Activated naive CD4-positive, alpha-beta T cell treated with anti-CD3 and anti-CD28 coated beads for 36 hours (primary cell): ENCODE measurements at regions of chr3 and their contacts with region 1.

Region 1: GRCh38 chr3:115092220-115092791 is 54.8 kb downstream of the ZBTB20 start:
- DNase-seq: peak; percentile 79
- H3K4me3 Mint-ChIP-seq: no peak overlapping the region
- H3K27ac Mint-ChIP-seq: no peak overlapping the region
- H3K4me1 Mint-ChIP-seq: peaks cover 34% of the 10 kb centered on the region
- H3K27me3 Mint-ChIP-seq: no peaks in the 10 kb centered on the region

Region 2: DNA sequence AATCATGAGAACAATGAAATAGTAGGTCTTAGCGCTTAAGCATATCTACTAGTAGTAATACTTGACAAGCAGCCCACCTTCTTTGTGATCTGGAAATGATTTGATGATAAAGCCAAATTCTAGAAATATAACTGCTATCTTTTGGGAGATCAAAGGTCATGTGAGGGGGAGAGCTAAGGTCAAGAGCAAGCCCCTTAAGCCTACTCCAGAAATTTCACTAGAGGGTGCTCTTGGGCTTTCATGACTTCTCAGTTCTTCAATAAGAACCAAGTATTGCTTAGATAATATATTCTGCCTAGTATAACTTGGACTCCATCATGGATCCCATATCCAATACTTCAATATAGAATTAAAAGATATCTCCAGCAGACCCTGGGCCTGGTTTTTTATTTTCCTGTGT is 264.8 kb before region 1 on chr3:
- CTCF ChIA-PET with region 1: interaction called, 3 read pairs
- intact Hi-C with region 1: loop called (anchors 2 kb)
- DNase-seq: peak; percentile 11
- H3K4me3 Mint-ChIP-seq: no peak overlapping the region
- H3K27ac Mint-ChIP-seq: no peak overlapping the region
- H3K4me1 Mint-ChIP-seq: peaks cover 4% of the 10 kb centered on the region
- H3K27me3 Mint-ChIP-seq: no peaks in the 10 kb centered on the region

Region 3: DNA sequence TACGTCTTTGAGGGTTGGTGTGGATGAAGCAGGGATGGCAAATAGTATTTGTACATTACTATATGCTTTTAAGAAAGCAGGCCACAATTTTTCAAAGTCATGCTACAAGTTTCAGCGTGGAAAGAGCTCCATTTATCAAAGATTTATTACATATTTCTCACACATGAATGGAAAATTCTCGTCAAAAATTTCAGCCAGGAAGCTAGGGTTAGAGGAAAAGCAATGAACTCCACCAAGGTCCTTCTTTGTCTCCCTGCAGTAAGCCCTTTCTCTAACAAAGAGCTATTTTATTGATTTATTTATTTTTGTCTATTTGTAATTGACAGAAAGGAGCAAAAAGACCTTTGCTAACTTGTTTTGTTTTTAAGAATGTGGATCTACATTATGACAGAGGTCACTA is 62.3 kb after region 1 on chr3:
- CTCF ChIA-PET with region 1: no interaction called
- intact Hi-C with region 1: no loop called
- DNase-seq: no peak
- H3K4me3 Mint-ChIP-seq: no peak overlapping the region
- H3K27ac Mint-ChIP-seq: no peak overlapping the region
- H3K4me1 Mint-ChIP-seq: no peaks in the 10 kb centered on the region
- H3K27me3 Mint-ChIP-seq: no peaks in the 10 kb centered on the region

Region 4: GRCh38 chr3:115169808-115170207 is 77.5 kb after region 1 on chr3:
- CTCF ChIA-PET with region 1: interaction called, 67 read pairs
- intact Hi-C with region 1: loop called (anchors 1 kb)
- DNase-seq: no peak
- H3K4me3 Mint-ChIP-seq: no peak overlapping the region
- H3K27ac Mint-ChIP-seq: no peak overlapping the region
- H3K4me1 Mint-ChIP-seq: peaks cover 12% of the 10 kb centered on the region
- H3K27me3 Mint-ChIP-seq: no peaks in the 10 kb centered on the region

Region 5: GRCh38 chr3:115512565-115513415 is 420.5 kb after region 1 on chr3:
- CTCF ChIA-PET with region 1: interaction called, 3 read pairs
- intact Hi-C with region 1: loop called (anchors 5 kb)
- DNase-seq: peak; percentile 50
- H3K4me3 Mint-ChIP-seq: peak overlapping the region; percentile 83
- H3K27ac Mint-ChIP-seq: no peak overlapping the region
- H3K4me1 Mint-ChIP-seq: peaks cover 20% of the 10 kb centered on the region
- H3K27me3 Mint-ChIP-seq: peaks cover 33% of the 10 kb centered on the region

Region 6: GRCh38 chr3:115814778-115815380 is 722.6 kb after region 1 on chr3:
- CTCF ChIA-PET with region 1: no interaction called
- intact Hi-C with region 1: loop called (anchors 1 kb)
- DNase-seq: peak; percentile 82
- H3K4me3 Mint-ChIP-seq: no peak overlapping the region
- H3K27ac Mint-ChIP-seq: no peak overlapping the region
- H3K4me1 Mint-ChIP-seq: no peaks in the 10 kb centered on the region
- H3K27me3 Mint-ChIP-seq: no peaks in the 10 kb centered on the region